BJ (cell line): ENCODE measurements at regions of chr17 and their contacts with region 1.

Region 1: DNA sequence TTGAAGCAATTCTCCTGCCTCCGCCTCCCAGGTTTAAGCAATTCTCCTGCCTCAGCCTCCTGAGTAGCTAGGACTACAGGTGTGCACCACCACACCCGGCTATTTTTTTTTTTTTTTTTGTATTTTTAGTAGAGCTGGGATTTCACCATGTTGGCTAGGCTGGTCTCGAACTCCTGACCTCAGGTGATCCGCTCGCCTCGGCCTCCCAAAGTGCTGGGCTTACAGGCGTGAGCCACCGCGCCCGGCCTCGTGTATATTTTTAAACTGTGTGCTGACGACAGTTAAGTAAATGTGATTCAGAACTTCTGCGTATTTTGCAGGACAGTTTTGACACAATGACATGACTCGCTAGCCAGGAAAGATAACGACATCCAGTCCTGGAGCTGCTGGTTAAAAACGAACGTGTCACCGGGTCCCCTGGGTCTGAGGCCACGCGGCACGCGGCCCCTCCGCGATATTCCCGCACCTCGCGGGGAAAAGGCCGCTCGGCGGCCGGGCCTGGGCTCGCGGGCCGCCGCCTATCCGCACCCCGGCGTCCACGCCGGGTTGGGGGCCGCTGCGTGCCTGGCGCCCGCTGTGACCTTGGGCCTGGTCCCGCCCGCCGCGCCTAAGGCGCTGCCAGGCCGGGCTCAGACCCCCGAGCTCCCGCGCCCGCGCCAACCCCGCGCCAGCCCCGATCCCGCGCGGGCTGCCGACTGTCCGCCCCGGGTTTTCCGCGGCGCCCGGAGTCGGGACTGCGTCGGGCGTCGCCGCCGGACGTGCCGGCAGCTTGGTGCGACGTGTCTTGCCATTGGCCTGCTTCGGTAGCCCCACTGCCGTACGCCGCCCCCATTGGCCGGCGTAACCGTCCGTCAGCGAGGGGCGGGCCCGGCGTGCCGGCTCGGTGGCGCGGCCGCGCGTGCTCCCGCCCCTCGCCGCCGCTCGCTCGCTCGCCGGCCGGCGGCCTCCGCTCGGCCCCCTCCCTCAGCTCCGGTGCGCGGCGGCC is at the start of gene FOXK2:
- DNase-seq: no peak
- H3K4me3 ChIP-seq: peak within 1 kb of the TSS; percentile 85
- H3K27me3 ChIP-seq: no peaks in the 10 kb centered on the region
- CTCF ChIP-seq: no peak
- polyA plus RNA-seq, gene FOXK2: 19.2 and 19.9 TPM in 2 replicates

Region 2: DNA sequence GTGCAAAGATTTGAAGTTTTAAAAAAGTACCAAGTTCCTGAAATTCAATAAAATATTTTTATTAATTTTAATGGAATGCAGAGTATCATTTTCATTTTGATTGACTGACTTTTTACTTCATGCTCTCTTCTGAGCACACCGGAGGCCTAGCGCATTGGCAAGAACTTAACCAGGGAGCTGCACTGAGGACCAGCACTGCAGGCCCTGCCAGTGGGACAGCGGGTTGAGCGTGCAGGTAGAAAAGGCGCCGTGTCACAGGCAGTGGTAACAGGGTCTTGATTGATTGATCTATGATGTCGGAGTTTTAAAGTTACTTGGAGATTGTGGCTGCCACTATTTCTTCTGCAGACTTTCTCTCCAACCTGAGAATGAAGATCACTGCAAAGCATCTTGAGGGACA is 85.4 kb after region 1 on chr17:
- CTCF ChIA-PET with region 1: no interaction called
- POLR2A ChIA-PET with region 1: interaction called, 10 read pairs
- DNase-seq: no peak
- H3K4me3 ChIP-seq: no peak overlapping the region
- H3K27me3 ChIP-seq: no peaks in the 10 kb centered on the region
- CTCF ChIP-seq: no peak